Activated naive CD4-positive, alpha-beta T cell treated with anti-CD3 and anti-CD28 coated beads for 36 hours (primary cell): ENCODE measurements at regions of chr4 and their contacts with region 1.

Region 1: GRCh38 chr4:8267077-8267476 is 2.5 kb upstream of the HTRA3 start:
- DNase-seq: peak; percentile 58
- H3K4me3 Mint-ChIP-seq: no peak overlapping the region
- H3K27ac Mint-ChIP-seq: no peak overlapping the region
- H3K4me1 Mint-ChIP-seq: no peaks in the 10 kb centered on the region
- H3K27me3 Mint-ChIP-seq: peaks cover 23% of the 10 kb centered on the region

Region 2: DNA sequence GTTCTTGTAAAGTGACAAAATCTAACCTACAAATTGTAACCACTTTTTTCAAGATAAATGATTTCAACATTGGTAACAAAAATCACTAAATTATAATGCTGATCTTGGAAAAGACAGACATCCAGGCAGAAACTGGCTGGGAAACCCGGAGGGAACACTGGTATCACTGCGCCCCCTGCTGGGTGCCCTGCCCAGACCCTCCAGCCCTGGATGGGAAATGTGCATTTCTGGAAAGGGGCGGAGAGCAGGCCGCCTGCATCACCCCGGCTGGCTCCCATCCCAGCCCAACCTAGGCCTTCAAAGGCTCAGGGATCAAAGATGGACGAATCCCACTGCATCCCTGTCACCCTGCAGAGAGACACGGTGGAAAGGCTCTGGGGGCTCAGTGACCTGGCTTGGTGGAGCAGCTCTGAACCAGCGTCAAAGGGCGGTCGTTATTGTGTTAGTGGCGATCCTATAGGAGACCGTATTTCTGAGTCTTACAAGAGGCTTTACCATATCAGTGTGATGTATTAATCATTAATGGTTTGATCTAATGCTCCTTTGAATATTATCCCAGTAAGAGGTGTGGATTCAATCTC is 136.2 kb after region 1 on chr4:
- CTCF ChIA-PET with region 1: interaction called, 11 read pairs
- intact Hi-C with region 1: loop called (anchors 1 kb)
- DNase-seq: peak; percentile 69
- H3K4me3 Mint-ChIP-seq: no peak overlapping the region
- H3K27ac Mint-ChIP-seq: no peak overlapping the region
- H3K4me1 Mint-ChIP-seq: no peaks in the 10 kb centered on the region
- H3K27me3 Mint-ChIP-seq: no peaks in the 10 kb centered on the region

Region 3: DNA sequence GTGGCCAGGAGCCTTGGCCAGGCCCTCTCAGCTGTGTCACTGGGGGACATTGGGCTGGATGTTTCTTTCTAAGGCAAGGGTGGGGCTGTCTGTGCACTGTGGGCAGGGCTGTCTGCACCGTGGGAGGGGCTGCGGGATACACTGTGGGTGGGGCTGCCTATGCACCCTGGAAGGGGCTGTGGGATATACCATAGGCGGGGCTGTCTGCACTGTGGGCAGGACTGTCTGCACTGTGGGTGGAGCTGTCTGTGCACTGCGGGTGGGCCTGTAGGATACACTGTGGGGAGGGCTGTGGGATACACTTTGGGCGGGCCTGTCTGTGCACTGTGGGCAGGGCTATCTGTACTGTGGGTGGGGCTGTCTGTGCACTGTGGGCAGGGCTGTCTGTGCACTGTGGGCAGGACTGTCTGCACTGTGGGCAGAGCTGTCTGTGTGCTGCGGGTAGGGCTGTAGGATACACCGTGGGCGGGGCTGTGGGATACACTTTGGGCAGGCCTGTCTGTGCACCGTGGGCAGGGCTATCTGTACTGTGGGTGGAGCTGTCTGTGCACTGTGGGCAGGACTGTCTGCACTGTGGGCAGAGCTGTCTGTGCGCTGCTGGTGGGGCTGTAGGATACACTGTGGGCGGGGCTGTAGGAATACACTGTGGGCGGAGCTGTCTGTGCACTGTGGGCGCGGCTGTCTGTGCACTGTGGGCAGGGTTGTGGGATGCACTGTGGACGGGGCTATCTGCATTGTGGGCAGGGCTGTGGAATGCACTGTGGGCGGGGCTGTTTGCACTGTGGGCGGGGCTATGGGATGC is 142.4 kb after region 1 on chr4:
- CTCF ChIA-PET with region 1: interaction called, 11 read pairs
- intact Hi-C with region 1: no loop called
- DNase-seq: no peak
- H3K4me3 Mint-ChIP-seq: no peak overlapping the region
- H3K27ac Mint-ChIP-seq: no peak overlapping the region
- H3K4me1 Mint-ChIP-seq: peaks cover 5% of the 10 kb centered on the region
- H3K27me3 Mint-ChIP-seq: no peaks in the 10 kb centered on the region

Region 4: GRCh38 chr4:8646296-8647093 is 379.4 kb after region 1 on chr4:
- CTCF ChIA-PET with region 1: no interaction called
- intact Hi-C with region 1: no loop called
- DNase-seq: no peak
- H3K4me3 Mint-ChIP-seq: no peak overlapping the region
- H3K27ac Mint-ChIP-seq: no peak overlapping the region
- H3K4me1 Mint-ChIP-seq: no peaks in the 10 kb centered on the region
- H3K27me3 Mint-ChIP-seq: peaks cover 3% of the 10 kb centered on the region